ENCODE measurements at regions of chr10 and their contacts with region 1.

Region 1: DNA sequence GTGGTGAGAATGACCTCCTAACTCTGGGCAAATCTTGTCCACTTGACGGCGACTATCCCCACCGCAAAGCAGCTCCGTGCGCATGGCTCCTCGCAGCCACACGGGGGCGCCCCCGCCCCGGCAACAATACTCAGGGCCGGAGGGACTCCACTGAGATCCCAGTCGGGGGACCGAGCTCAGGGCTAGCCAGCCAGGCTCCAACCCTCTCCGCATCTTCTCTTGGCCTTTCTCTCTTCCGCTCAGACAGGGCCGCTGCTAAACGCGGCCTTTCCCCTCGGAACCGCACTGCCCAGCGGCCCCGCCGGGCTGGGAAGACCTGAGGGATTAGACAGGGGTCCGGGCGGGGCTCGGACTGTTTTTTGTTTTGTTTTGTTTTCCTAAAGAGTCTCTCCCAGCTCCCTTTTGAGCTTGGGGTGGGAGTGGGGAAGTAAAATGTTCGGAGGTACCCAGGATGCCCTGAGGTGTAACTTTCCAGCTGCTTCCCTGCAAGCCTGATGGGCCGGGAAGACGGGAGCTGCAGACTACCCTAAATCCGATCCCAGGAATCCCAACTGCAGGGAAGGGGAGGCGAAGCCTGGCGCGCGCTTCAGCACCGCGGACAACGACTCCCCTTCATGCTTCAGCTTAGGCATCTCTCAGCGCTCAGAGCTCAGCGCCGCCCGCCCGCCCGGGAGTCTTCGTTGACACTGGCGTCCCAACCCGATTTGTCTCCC is 2.7 kb downstream of the KCNIP2 start:
- DNase-seq: no peak
- H3K4me3 ChIP-seq: peak overlapping the region; percentile 45
- CTCF ChIP-seq: peak; percentile 99

Region 2: DNA sequence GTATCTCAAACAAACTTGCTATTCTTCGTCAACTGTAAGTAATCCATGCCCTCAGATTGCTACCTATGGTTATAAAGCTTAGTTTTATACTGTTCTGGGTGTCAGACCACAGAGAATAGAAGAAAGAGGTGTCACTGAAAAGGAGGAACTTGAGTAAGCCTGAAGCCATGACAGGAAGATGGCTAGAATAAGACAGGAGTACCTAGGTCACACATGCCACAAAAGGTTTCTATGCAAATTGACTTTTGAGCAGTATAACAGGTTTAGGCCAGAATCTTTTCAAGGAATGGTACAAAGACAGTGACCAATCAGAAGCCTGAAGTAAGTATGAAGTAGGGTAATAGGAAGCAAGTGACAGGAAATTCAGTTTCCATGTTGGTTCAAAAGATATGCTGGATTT is 169.4 kb before region 1 on chr10:
- CTCF ChIA-PET with region 1: no interaction called
- POLR2A ChIA-PET with region 1: no interaction called
- DNase-seq: no peak
- H3K4me3 ChIP-seq: no peak overlapping the region
- CTCF ChIP-seq: no peak

Region 3: DNA sequence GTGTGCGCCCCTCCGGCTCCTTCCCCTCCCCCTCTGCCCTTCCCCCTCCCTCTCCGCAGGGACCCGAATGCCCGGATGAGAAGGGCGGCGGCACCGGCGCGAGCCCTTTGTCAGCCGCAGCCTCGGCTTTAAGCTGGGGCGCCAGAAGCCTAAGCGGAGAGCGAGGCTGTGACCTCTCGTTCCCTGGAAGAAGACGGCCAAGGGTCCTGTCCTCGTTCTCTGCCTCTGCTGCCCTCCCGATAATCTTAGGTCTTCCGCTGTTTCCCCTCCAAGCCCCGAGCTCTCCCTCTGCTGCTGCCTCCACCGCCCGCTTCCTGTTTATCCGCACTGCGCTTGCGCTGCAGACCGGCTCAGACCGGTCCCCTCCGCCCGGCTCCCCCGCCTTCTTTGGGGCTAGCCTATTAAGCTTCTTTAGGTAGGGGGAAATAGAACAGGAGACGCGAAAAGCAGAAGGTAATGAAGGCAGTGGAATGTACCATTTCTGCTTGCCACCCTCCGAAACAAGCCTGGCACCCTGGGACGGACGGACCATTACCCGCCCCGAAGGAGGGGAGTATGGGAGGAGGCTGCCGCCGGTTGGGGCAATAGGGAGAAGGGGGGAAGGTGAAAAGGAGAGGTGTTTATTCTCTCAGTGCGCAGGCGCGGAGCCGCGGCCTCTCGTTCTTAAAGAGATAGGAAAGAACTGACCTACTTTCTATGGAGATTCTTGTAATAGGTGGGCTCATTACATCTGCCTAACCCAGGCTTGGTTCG is 22.6 kb before region 1 on chr10 and contains the start of gene OGA:
- CTCF ChIA-PET with region 1: interaction called, 15 read pairs
- POLR2A ChIA-PET with region 1: interaction called, 7 read pairs
- DNase-seq: peak; percentile 100
- H3K4me3 ChIP-seq: peak within 1 kb of the TSS; percentile 99
- CTCF ChIP-seq: no peak

Region 4: DNA sequence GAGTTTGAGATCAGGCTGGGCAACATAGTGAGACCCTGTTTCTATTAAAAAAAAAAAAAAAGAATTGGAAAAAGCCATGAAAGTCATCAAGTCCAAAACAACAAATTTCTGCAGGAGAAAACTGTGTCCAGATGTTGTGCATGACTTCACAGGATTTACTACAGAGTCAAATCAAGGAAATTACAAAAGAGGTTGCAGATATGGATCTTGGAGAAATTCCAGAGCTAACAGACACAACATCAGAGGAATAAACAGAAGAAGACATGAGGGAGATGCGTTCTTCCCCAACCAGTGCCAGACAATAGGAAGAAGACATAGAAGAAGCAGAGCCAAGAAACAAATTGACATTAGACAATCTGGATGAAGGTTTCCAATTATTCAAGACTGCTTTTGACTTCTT is 27.0 kb after region 1 on chr10:
- CTCF ChIA-PET with region 1: interaction called, 12 read pairs
- POLR2A ChIA-PET with region 1: no interaction called
- DNase-seq: no peak
- H3K4me3 ChIP-seq: no peak overlapping the region
- CTCF ChIP-seq: no peak

Region 5: DNA sequence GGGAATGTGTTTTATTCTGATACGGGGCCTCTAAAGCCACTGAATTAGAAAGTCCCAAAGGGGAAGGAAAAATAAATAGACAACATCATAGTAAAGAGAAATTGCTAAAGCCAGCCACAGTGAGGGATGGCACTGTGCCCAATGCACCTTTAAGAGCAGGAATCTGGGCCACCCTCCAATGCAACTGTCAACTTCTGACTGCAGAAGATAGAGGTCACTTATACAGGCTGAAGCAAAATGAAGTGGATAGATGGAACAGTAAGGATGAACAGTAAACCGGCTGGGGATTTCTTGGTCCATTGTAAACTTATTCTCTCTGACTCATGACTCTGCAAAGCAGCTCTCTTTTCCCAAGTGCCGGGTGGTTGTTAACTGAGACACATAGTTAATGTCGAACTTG is 56.7 kb after region 1 on chr10:
- CTCF ChIA-PET with region 1: interaction called, 18 read pairs
- POLR2A ChIA-PET with region 1: no interaction called
- DNase-seq: no peak
- H3K4me3 ChIP-seq: no peak overlapping the region
- CTCF ChIP-seq: no peak

Region 6: DNA sequence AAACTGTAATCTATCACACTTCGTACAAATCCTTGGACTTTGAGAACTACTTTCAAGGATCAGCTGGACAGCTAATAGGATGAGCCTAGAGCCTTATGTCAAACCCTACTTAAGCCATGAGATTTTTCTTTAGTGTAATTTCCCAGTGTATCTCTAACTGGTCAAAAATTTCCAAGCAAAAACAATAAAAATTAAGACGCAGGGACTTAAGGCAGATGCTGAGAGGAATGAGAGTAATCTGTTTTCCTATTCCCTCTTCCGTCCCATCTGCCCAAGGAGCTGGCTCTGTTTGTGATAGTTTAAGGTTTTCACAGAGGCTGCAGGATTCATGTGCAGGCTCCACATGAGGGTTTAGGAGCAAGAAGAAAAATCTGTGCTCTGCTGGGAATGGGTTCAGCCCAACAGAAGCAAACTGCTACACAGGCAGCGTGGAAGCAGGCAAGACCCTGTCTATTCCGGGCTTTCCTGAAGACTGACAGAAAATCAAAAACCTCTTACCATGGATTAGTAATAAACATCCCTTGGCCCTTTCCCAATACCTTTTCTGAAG is 152.8 kb after region 1 on chr10:
- CTCF ChIA-PET with region 1: interaction called, 581 read pairs
- POLR2A ChIA-PET with region 1: interaction called, 4 read pairs
- DNase-seq: no peak
- H3K4me3 ChIP-seq: no peak overlapping the region
- CTCF ChIP-seq: no peak

Region 7: GRCh38 chr10:102064868-102065560 is 224.1 kb after region 1 on chr10 and contains the start of gene HPS6:
- CTCF ChIA-PET with region 1: interaction called, 188 read pairs
- POLR2A ChIA-PET with region 1: no interaction called
- DNase-seq: peak; percentile 23
- H3K4me3 ChIP-seq: peak within 1 kb of the TSS; percentile 81
- CTCF ChIP-seq: no peak